Activated CD4-positive, alpha-beta T cell treated with anti-CD3 and anti-CD28 coated beads, Interleukin-2, amount 10 ng/mL, durations not matched to agents 24 days and 14 days (primary cell): ENCODE measurements at regions of chr5 and their contacts with region 1.

Region 1: GRCh38 chr5:82356808-82357671 is 78.9 kb upstream of the RPS23 start:
- DNase-seq: peak; percentile 93
- H3K4me3 Mint-ChIP-seq: peak overlapping the region; percentile 81
- H3K27ac Mint-ChIP-seq: peak overlapping the region; percentile 98
- H3K4me1 Mint-ChIP-seq: peaks cover 71% of the 10 kb centered on the region
- H3K27me3 Mint-ChIP-seq: no peaks in the 10 kb centered on the region

Region 2: DNA sequence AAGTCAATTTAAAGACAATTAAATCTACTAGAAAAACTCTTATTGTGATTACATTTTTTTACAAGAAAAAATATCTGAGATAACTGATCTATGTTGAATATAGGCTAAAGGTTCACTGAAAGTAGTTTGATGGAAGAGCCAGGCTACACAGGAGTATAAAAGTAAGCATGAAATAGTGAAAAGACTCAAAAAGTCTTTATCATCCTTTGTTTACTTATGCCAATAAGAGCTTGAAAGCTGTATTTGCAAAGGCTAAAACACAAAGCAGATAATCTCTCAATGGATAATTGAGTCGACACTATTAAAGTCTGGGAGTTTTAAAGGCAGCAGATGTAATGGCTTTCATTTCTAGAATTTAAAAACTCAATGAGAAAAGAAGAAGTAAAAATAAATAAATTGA is 648.2 kb before region 1 on chr5:
- intact Hi-C with region 1: no loop called
- DNase-seq: no peak
- H3K4me3 Mint-ChIP-seq: no peak overlapping the region
- H3K27ac Mint-ChIP-seq: no peak overlapping the region
- H3K4me1 Mint-ChIP-seq: no peaks in the 10 kb centered on the region
- H3K27me3 Mint-ChIP-seq: no peaks in the 10 kb centered on the region

Region 3: DNA sequence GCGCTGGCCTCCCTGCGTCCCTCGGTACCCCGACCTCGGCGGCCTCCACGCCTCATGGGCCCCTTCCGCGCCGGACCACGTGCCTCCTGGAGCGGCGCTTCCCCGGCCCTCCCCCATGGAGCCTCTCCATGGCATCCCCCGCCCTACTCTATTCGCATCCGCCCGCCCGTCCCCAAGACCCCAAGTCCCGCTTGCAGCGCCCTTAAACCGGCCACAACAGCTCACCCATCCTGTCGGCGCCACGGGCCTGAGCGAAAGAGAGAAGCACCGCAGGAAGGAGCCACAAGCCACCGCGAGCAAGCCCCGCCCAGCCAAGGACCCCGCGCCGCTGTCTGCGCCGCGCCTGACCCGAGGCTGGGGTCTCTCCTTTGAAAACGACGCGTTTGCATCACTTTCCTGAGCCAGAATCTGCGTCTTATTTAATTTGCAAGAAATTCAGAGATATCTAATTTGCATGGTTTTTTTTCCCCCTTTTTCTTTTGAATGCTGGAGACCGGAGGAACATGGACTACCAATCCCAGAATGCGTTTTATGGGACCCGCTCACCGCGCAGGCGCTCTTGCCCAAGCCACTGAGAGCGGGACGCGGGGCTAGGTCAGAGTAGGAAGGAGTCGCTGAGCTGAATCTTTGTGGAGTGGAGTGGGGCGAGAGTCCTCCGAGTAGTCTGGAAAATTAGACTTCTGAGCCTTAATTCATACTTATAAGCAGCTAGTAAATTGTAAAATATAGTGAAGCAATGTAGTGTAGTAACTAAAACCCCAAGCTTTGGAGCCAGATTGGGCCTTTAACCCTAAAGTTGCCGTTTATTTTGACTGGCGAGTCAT is 78.7 kb before region 1 on chr5 and contains the start of gene RPS23:
- intact Hi-C with region 1: loop called (anchors 5 kb)
- DNase-seq: peak; percentile 96
- H3K4me3 Mint-ChIP-seq: peak within 1 kb of the TSS; percentile 89
- H3K27ac Mint-ChIP-seq: peak within 1 kb of the TSS; percentile 98
- H3K4me1 Mint-ChIP-seq: peaks cover 32% of the 10 kb centered on the region
- H3K27me3 Mint-ChIP-seq: no peaks in the 10 kb centered on the region
- total RNA-seq, gene RPS23: 2,481 and 2,489 TPM in 2 replicates

Region 4: DNA sequence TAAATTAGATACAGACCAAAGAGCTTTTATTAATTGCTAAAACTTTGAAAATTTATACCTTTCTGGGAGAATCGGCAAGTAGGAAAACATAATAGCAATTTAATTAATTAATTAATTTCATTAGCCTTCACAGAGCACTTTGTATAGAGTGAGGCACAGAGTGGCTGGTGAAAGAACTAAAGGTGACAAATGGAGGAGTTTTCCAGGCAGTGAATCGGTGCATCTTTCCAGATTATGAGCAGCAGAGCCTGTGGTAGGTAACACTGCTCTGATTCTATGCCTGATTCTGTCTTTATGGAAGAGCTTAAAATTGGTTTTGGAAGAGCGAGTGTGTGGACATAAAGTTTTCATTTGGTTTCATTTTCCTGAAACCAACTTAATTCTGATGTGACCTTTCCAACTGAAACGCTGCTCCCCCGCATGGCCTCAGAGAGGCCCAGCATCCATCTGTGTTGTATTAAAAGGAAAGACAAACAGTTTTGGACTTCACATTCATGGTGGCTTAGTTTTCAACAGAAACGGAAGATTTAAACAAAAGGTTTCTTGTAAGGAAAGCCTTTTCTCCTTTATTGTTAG is 110.0 kb after region 1 on chr5:
- intact Hi-C with region 1: loop called (anchors 5 kb)
- DNase-seq: no peak
- H3K4me3 Mint-ChIP-seq: no peak overlapping the region
- H3K27ac Mint-ChIP-seq: no peak overlapping the region
- H3K4me1 Mint-ChIP-seq: no peaks in the 10 kb centered on the region
- H3K27me3 Mint-ChIP-seq: peaks cover 4% of the 10 kb centered on the region

Region 5: DNA sequence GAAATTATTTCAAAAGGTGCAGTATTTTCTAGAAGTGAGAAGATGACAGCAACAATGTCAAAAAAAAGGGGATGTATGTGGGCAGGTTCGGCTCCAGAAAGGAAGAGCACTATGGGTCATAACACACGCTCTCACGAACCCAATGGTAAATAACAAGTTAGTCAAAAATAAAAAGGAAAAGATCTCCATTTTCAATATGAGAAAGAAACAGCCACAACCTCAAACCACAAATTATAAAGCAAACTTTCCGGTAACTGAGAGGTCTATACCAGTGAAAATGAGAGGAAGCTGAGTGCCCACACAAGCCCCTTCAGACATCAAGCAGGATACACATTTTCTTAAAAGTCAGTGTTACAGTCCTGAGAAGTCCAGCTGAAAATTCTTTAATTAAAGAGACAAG is 319.6 kb after region 1 on chr5:
- intact Hi-C with region 1: loop called (anchors 1 kb)
- DNase-seq: peak; percentile 74
- H3K4me3 Mint-ChIP-seq: peak overlapping the region; percentile 51
- H3K27ac Mint-ChIP-seq: peak overlapping the region; percentile 79
- H3K4me1 Mint-ChIP-seq: peaks cover 18% of the 10 kb centered on the region
- H3K27me3 Mint-ChIP-seq: no peaks in the 10 kb centered on the region

Region 6: GRCh38 chr5:83564069-83564749 is 1207.2 kb after region 1 on chr5:
- intact Hi-C with region 1: loop called (anchors 1 kb)
- DNase-seq: no peak
- H3K4me3 Mint-ChIP-seq: no peak overlapping the region
- H3K27ac Mint-ChIP-seq: no peak overlapping the region
- H3K4me1 Mint-ChIP-seq: no peaks in the 10 kb centered on the region
- H3K27me3 Mint-ChIP-seq: peaks cover 32% of the 10 kb centered on the region